ENCODE measurements at regions of chr9 and their contacts with region 1.

Region 1: GRCh38 chr9:5586391-5586802 is 42.5 kb upstream of the RIC1 start:
- DNase-seq: no peak
- H3K4me3 ChIP-seq: no peak overlapping the region
- H3K27ac ChIP-seq: no peak overlapping the region
- H3K4me1 ChIP-seq: peaks cover 18% of the 10 kb centered on the region
- H3K27me3 ChIP-seq: no peaks in the 10 kb centered on the region
- CTCF ChIP-seq: no peak

Region 2: GRCh38 chr9:5459289-5459829 is 127.0 kb before region 1 on chr9:
- intact Hi-C with region 1: loop called (anchors 5 kb)
- DNase-seq: no peak
- H3K4me3 ChIP-seq: no peak overlapping the region
- H3K27ac ChIP-seq: no peak overlapping the region
- H3K4me1 ChIP-seq: peaks cover 12% of the 10 kb centered on the region
- H3K27me3 ChIP-seq: no peaks in the 10 kb centered on the region
- CTCF ChIP-seq: no peak

Region 3: DNA sequence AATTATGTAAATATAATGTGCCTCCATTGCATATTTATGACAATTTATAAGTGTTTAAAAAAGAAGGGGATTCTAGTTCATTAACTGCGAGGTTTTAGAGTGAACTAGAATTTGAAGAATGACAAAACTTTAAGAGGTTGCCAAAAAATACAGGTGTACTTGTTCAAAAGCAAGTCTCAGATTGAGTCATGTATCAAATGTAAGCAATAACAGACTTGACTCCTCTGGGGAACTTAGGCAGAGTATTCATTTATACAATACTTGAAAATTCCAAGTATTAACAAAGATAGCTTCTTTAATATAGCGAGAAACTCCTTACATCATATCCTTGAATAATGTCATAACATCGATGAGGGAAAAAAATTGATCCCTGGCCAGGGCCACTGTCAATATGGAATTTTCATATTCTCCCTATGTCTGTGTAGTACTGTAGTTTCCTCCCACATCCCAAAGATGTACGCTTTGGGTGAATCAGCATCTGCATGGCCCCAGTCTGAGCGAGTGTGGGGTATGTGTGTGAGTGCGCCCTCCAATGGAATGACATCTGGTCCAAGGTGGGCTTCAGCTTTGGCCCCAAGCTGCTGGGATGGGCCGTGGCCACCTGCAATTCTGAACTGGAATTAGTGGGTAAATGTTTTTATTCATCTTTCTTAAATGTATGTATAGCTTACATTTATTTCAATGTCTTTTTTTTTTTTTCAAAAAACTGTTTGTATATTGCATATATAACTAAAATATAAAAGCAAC is 112.6 kb after region 1 on chr9:
- intact Hi-C with region 1: no loop called
- DNase-seq: no peak
- H3K4me3 ChIP-seq: no peak overlapping the region
- H3K27ac ChIP-seq: no peak overlapping the region
- H3K4me1 ChIP-seq: no peaks in the 10 kb centered on the region
- H3K27me3 ChIP-seq: no peaks in the 10 kb centered on the region
- CTCF ChIP-seq: no peak

Measured in left ventricle myocardium inferior (tissue), 1 donor.